ENCODE measurements at regions of chr3 and their contacts with region 1.

Region 1: DNA sequence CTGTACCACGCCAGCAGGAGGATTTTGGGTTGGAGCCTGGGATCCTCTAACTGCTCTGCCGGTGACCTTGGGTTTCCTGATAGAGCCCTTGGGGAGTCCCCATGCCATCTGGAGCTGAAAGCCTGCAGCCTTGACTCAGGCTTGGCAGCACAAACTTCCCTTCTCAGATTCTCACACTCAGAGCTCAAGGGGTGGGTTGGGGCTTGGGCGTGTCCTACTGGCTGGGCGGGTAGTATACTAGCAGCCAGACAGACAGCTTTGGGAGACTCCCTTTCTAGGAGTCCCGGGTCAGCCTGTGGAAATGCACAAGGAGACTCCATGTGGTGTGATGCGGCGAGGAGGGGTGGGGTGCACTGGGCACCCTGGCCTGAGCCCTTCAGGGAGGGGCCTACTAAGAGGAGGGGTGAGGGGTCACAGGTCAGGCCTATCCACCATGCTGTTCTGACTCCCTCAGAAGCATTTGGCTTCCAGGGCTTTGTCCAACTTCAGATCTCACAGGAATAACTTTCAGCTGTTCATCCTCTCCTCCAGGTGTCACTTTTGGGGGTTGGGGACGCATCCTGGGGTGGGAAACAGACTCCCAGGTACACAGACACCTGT is 21.6 kb upstream of the PLXNA1 start:
- DNase-seq: peak; percentile 61
- ATAC-seq: peak; percentile 57
- H3K4me3 ChIP-seq: no peak overlapping the region
- H3K27ac ChIP-seq: no peak overlapping the region
- H3K4me1 ChIP-seq: peaks cover 15% of the 10 kb centered on the region; the same call in 1 of the 2 replicates
- H3K27me3 ChIP-seq: no peaks in the 10 kb centered on the region
- CTCF ChIP-seq: no peak
- POLR2A ChIP-seq: no peak
- RAD21 ChIP-seq: no peak

Region 2: DNA sequence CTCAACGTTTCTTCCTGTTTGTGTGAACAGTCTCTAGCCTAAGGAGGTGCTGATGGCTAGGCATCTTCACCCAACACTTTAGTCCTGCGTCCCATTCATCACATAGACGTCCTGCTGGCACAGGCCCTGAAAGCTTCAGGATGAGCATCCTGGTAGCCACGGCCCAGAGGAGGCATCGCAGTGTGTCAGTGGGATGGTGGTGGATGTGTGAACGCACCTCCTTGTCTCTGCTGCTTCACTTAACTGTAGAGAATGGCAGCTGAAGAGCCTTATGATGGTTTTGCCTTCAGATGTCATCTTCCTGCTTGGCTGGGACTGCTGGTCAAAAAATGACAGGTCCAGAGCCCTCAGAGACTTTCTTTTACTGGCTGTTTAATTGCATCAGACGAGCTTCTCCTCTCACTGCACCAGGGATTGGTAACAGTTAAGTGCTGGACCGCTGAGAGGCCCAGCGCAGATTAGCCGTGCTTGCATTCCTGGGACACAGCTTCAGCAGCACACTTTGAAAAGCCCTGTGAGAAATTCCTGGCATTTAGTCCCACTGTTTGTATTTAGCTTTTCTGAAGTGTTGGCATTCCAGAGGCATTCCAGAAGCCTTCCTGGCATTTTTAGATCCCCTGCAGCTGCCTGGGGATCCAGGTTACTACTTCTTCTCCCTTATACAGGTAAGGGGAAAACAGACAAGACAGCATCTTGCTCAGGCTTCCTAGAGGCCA is 110.8 kb before region 1 on chr3:
- CTCF ChIA-PET with region 1: no interaction called
- POLR2A ChIA-PET with region 1: no interaction called
- dilution Hi-C with region 1: no loop called
- in situ Hi-C with region 1: no loop called
- intact Hi-C with region 1: loop called (anchors 5 kb)
- DNase-seq: peak; percentile 78
- ATAC-seq: peak; percentile 97
- H3K4me3 ChIP-seq: no peak overlapping the region
- H3K27ac ChIP-seq: peak overlapping the region; percentile 79
- H3K4me1 ChIP-seq: peaks cover 15% of the 10 kb centered on the region
- H3K27me3 ChIP-seq: no peaks in the 10 kb centered on the region
- CTCF ChIP-seq: no peak
- POLR2A ChIP-seq: no peak
- RAD21 ChIP-seq: no peak

Region 3: GRCh38 chr3:126883241-126883640 is 78.0 kb before region 1 on chr3:
- CTCF ChIA-PET with region 1: no interaction called
- POLR2A ChIA-PET with region 1: no interaction called
- dilution Hi-C with region 1: no loop called
- in situ Hi-C with region 1: no loop called
- intact Hi-C with region 1: no loop called
- DNase-seq: peak; percentile 66
- ATAC-seq: peak; percentile 52
- H3K4me3 ChIP-seq: no peak overlapping the region
- H3K27ac ChIP-seq: no peak overlapping the region
- H3K4me1 ChIP-seq: peaks cover 10% of the 10 kb centered on the region
- H3K27me3 ChIP-seq: no peaks in the 10 kb centered on the region
- CTCF ChIP-seq: no peak
- POLR2A ChIP-seq: no peak
- RAD21 ChIP-seq: no peak

Measured in IMR-90 (cell line).